Caco-2 (cell line): ENCODE measurements at regions of chr13 and their contacts with region 1.

Region 1: GRCh38 chr13:110915057-110915873 is at the start of gene ANKRD10:
- DNase-seq: peak; percentile 100
- H3K4me3 ChIP-seq: peak within 1 kb of the TSS; percentile 95
- H3K4me3 Mint-ChIP-seq: peak within 1 kb of the TSS; percentile 71
- H3K27ac Mint-ChIP-seq: peak within 1 kb of the TSS; percentile 79
- H3K4me1 ChIP-seq: peaks cover 23% of the 10 kb centered on the region; the same call in 1 of the 2 replicates
- H3K4me1 Mint-ChIP-seq: peaks cover 7% of the 10 kb centered on the region
- H3K27me3 ChIP-seq: no peaks in the 10 kb centered on the region
- H3K27me3 Mint-ChIP-seq: no peaks in the 10 kb centered on the region
- CTCF ChIP-seq: peak; percentile 78 to 80
- total RNA-seq, gene ANKRD10: 123 and 132 TPM in 2 replicates

Region 2: GRCh38 chr13:110319774-110320509 is 595.3 kb before region 1 on chr13:
- CTCF ChIA-PET with region 1: no interaction called
- POLR2A ChIA-PET with region 1: no interaction called
- intact Hi-C with region 1: loop called (anchors 10 kb)
- DNase-seq: no peak
- H3K4me3 ChIP-seq: no peak overlapping the region
- H3K4me3 Mint-ChIP-seq: no peak overlapping the region
- H3K27ac Mint-ChIP-seq: no peak overlapping the region
- H3K4me1 ChIP-seq: peaks cover 22% of the 10 kb centered on the region
- H3K4me1 Mint-ChIP-seq: peaks cover 29% of the 10 kb centered on the region
- H3K27me3 ChIP-seq: no peaks in the 10 kb centered on the region
- H3K27me3 Mint-ChIP-seq: no peaks in the 10 kb centered on the region
- CTCF ChIP-seq: no peak

Region 3: DNA sequence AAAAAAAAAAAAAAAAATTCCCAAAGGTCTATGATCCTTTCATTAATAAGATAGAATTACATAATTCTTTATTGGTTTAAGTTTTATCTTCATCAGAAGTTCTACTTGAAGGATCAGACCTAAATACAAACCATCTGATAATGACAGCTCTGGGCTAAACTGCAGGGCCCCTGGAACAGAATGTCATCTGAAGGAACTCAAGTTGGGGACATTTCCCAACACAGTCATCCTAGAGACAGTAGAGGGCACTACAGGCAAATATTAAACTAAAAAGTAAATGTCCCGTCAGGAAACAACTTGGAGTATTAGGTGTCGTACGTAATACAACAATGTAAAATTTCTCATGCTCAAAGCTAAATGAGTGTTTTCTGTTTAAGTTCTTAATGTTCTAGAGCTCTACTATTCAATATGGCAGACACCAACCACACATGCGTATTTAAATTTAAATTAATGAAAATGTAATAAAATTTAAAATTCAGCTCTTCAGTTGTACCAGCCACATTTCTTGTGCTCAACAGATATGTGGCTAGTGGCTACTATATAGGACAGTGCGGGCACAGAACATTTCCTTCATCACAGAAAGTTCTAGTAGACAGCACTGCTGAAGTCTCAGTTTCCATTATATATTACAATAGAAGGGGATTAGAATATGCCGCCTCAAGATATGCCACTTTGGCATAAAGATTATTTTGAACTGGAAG is 321.7 kb before region 1 on chr13:
- CTCF ChIA-PET with region 1: no interaction called
- POLR2A ChIA-PET with region 1: no interaction called
- intact Hi-C with region 1: loop called (anchors 10 kb)
- DNase-seq: peak in 1 of 2 experiments; percentile 67
- H3K4me3 ChIP-seq: no peak overlapping the region
- H3K4me3 Mint-ChIP-seq: no peak overlapping the region
- H3K27ac Mint-ChIP-seq: no peak overlapping the region
- H3K4me1 ChIP-seq: peaks cover 12% of the 10 kb centered on the region
- H3K4me1 Mint-ChIP-seq: peaks cover 23% of the 10 kb centered on the region
- H3K27me3 ChIP-seq: no peaks in the 10 kb centered on the region
- H3K27me3 Mint-ChIP-seq: no peaks in the 10 kb centered on the region
- CTCF ChIP-seq: peak; percentile 63 to 64

Region 4: DNA sequence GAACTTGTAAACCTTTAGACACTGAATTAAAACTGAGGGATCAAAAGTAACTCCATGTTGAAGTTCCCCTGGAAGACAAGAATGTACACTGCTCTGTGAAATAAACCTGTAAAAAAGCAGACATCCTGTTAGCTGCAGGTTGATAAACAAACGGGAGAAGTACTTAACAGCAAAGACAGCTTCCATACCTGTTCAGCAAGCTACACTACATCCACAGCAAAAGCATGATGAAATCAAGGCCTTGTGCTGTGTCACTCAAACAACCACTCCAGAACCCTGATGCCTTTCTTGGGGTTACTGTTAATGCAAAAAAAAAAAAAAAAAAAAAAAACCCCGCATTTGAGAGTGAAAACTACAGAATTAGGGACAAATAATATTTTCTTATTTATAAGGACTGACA is 21.2 kb before region 1 on chr13:
- CTCF ChIA-PET with region 1: no interaction called
- POLR2A ChIA-PET with region 1: no interaction called
- intact Hi-C with region 1: loop called (anchors 2 kb)
- DNase-seq: no peak
- H3K4me3 ChIP-seq: no peak overlapping the region
- H3K4me3 Mint-ChIP-seq: no peak overlapping the region
- H3K27ac Mint-ChIP-seq: no peak overlapping the region
- H3K4me1 ChIP-seq: no peaks in the 10 kb centered on the region
- H3K4me1 Mint-ChIP-seq: no peaks in the 10 kb centered on the region
- H3K27me3 ChIP-seq: no peaks in the 10 kb centered on the region
- H3K27me3 Mint-ChIP-seq: no peaks in the 10 kb centered on the region
- CTCF ChIP-seq: no peak

Region 5: DNA sequence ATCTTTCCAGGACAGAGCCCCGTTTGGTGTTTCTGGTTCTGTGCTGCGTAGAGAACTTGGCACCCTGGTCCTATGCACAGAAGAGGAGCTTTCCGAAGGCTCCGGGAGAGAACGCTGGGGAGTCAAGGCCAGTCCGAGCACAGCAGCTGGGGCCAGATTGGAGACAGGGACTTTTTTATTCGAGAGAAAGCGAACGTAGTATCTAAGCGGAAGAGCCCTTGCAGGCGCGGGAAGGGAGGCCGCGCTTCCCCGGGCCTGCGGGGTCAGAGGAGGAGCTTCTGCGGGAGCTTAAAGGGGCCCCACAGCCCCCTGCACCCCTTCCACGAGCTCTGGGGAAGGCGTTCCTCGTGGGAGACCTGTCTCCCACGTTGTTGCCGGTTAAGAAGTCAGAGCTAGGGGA is 151.3 kb after region 1 on chr13:
- CTCF ChIA-PET with region 1: interaction called, 10 read pairs
- POLR2A ChIA-PET with region 1: no interaction called
- intact Hi-C with region 1: no loop called
- DNase-seq: no peak
- H3K4me3 ChIP-seq: no peak overlapping the region
- H3K4me3 Mint-ChIP-seq: peak overlapping the region; percentile 74
- H3K27ac Mint-ChIP-seq: no peak overlapping the region
- H3K4me1 ChIP-seq: no peaks in the 10 kb centered on the region
- H3K4me1 Mint-ChIP-seq: no peaks in the 10 kb centered on the region
- H3K27me3 ChIP-seq: no peaks in the 10 kb centered on the region
- H3K27me3 Mint-ChIP-seq: peaks cover 2% of the 10 kb centered on the region
- CTCF ChIP-seq: no peak

Region 6: DNA sequence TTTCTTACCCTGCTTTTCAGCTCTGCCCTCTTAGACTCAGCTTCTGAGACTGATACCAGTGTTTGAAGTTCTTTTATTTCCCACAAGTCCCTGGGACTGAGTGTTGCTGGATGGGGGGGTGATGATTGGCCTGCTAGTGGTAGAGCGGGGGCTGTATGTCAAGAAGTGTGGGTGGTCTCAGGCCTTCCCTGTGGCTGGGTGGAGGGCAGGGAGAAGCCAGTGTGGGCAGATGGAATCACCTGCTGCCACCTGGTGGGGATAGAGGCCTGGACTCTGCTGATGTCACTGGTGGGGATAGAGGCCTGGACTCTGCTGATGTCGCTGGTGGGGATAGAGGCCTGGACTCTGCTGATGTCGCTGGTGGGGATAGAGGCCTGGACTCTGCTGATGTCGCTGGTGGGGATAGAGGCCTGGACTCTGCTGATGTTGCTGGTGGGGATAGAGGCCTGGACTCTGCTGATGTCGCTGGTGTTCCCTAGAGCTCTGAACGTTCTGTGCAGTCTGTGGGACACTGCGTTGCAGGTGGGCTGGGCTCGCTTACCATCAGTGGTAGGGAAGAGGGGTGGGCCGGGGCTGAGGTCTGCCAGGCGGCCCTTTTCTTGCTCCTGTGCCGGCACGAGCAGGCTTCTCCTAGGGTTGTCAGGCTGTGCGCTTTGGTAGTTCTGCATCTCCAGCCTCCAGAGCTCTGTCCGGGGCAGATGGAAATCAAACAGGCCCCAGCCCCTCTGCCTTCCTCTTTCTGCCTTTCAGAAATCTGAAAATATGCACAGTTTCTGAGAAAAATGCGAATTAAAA is 301.1 kb after region 1 on chr13:
- CTCF ChIA-PET with region 1: no interaction called
- POLR2A ChIA-PET with region 1: no interaction called
- intact Hi-C with region 1: loop called (anchors 1 kb)
- DNase-seq: peak; percentile 50 to 63
- H3K4me3 ChIP-seq: no peak overlapping the region
- H3K4me3 Mint-ChIP-seq: no peak overlapping the region
- H3K27ac Mint-ChIP-seq: no peak overlapping the region
- H3K4me1 ChIP-seq: peaks cover 2% of the 10 kb centered on the region; the same call in 1 of the 2 replicates
- H3K4me1 Mint-ChIP-seq: peaks cover 8% of the 10 kb centered on the region
- H3K27me3 ChIP-seq: no peaks in the 10 kb centered on the region
- H3K27me3 Mint-ChIP-seq: no peaks in the 10 kb centered on the region
- CTCF ChIP-seq: peak; percentile 37 to 67